ENCODE measurements at regions of chr2 and their contacts with region 1.

Region 1: GRCh38 chr2:62195421-62196277 is at the start of gene B3GNT2:
- DNase-seq: peak; percentile 80
- H3K4me3 ChIP-seq: peak within 1 kb of the TSS; percentile 95 to 98
- H3K27ac ChIP-seq: peak within 1 kb of the TSS; percentile 92 to 95
- H3K4me1 ChIP-seq: no peaks in the 10 kb centered on the region
- H3K27me3 ChIP-seq: no peaks in the 10 kb centered on the region
- CTCF ChIP-seq: no peak
- POLR2A ChIP-seq: peak; percentile 79
- total RNA-seq, gene B3GNT2: 8.5 to 18.7 TPM

Region 2: GRCh38 chr2:61924895-61925663 is 270.6 kb before region 1 on chr2:
- intact Hi-C with region 1: loop called (anchors 5 kb)
- DNase-seq: no peak
- H3K4me3 ChIP-seq: no peak overlapping the region
- H3K27ac ChIP-seq: no peak overlapping the region
- H3K4me1 ChIP-seq: no peaks in the 10 kb centered on the region
- H3K27me3 ChIP-seq: no peaks in the 10 kb centered on the region
- CTCF ChIP-seq: no peak
- POLR2A ChIP-seq: no peak

Region 3: GRCh38 chr2:62102402-62102920 is 93.2 kb before region 1 on chr2:
- intact Hi-C with region 1: no loop called
- DNase-seq: no peak
- H3K4me3 ChIP-seq: no peak overlapping the region
- H3K27ac ChIP-seq: no peak overlapping the region
- H3K4me1 ChIP-seq: no peaks in the 10 kb centered on the region
- H3K27me3 ChIP-seq: no peaks in the 10 kb centered on the region
- CTCF ChIP-seq: no peak
- POLR2A ChIP-seq: no peak

Region 4: GRCh38 chr2:62293490-62294271 is 98.0 kb after region 1 on chr2:
- intact Hi-C with region 1: loop called (anchors 5 kb)
- DNase-seq: peak; percentile 83
- H3K4me3 ChIP-seq: no peak overlapping the region
- H3K27ac ChIP-seq: peak overlapping the region; percentile 78 to 79
- H3K4me1 ChIP-seq: peaks cover 13% of the 10 kb centered on the region
- H3K27me3 ChIP-seq: no peaks in the 10 kb centered on the region
- CTCF ChIP-seq: no peak
- POLR2A ChIP-seq: no peak

Region 5: GRCh38 chr2:62410015-62410453 is 214.4 kb after region 1 on chr2:
- intact Hi-C with region 1: loop called (anchors 5 kb)
- DNase-seq: no peak
- H3K4me3 ChIP-seq: no peak overlapping the region
- H3K27ac ChIP-seq: no peak overlapping the region
- H3K4me1 ChIP-seq: peaks cover 6% of the 10 kb centered on the region
- H3K27me3 ChIP-seq: no peaks in the 10 kb centered on the region
- CTCF ChIP-seq: no peak
- POLR2A ChIP-seq: no peak

Region 6: GRCh38 chr2:63012541-63012940 is 816.9 kb after region 1 on chr2:
- intact Hi-C with region 1: no loop called
- DNase-seq: no peak
- H3K4me3 ChIP-seq: no peak overlapping the region
- H3K27ac ChIP-seq: no peak overlapping the region
- H3K4me1 ChIP-seq: no peaks in the 10 kb centered on the region
- H3K27me3 ChIP-seq: no peaks in the 10 kb centered on the region
- CTCF ChIP-seq: no peak
- POLR2A ChIP-seq: no peak

Measured in prostate gland (tissue), 2 donors.